H1 (cell line): ENCODE measurements at regions of chr5 and their contacts with region 1.

Region 1: DNA sequence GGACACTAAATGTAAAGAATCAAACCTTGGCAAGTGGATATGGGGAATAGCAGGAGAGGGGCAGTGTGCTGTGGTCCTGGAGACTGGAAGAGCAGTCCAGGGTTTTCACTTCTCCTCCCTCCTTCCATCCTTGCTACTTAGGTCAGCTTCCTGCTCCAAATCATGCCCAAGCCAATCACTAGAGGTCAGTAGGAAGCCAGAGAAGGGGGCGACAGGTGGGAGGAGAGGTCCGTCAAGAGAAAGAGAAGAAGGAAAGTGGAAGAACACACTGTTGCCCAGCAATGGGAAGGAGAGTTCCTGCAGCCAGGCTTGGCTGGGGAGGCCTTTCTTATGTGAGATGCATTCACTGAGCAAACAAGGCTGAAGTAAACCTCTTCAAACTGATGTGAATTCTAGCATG is 289.6 kb downstream of the DTWD2 start:
- DNase-seq: peak in 1 of 2 experiments; percentile 17
- H3K4me3 ChIP-seq: no peak overlapping the region
- H3K27ac ChIP-seq: no peak overlapping the region
- H3K4me1 ChIP-seq: no peaks in the 10 kb centered on the region
- H3K27me3 ChIP-seq: no peaks in the 10 kb centered on the region
- CTCF ChIP-seq: peak; percentile 46 to 73 (median 60)
- EP300 ChIP-seq: no peak
- POLR2A ChIP-seq: no peak
- RAD21 ChIP-seq: peak; percentile 82 to 86

Region 2: GRCh38 chr5:118956727-118957126 is 258.0 kb after region 1 on chr5:
- CTCF ChIA-PET with region 1: interaction called, 12 read pairs
- POLR2A ChIA-PET with region 1: no interaction called
- DNase-seq: no peak
- H3K4me3 ChIP-seq: no peak overlapping the region
- H3K27ac ChIP-seq: no peak overlapping the region
- H3K4me1 ChIP-seq: peaks cover 0 to 10% (median 5%) of the 10 kb centered on the region in 4 experiments; a peak in 3 of 7 replicates
- H3K27me3 ChIP-seq: no peaks in the 10 kb centered on the region
- CTCF ChIP-seq: peak in 1 of 3 experiments; percentile 38; a peak in 2 of 4 replicates
- EP300 ChIP-seq: no peak
- POLR2A ChIP-seq: no peak
- RAD21 ChIP-seq: peak; percentile 59 to 76